ENCODE measurements at regions of chr17 and their contacts with region 1.

Region 1: DNA sequence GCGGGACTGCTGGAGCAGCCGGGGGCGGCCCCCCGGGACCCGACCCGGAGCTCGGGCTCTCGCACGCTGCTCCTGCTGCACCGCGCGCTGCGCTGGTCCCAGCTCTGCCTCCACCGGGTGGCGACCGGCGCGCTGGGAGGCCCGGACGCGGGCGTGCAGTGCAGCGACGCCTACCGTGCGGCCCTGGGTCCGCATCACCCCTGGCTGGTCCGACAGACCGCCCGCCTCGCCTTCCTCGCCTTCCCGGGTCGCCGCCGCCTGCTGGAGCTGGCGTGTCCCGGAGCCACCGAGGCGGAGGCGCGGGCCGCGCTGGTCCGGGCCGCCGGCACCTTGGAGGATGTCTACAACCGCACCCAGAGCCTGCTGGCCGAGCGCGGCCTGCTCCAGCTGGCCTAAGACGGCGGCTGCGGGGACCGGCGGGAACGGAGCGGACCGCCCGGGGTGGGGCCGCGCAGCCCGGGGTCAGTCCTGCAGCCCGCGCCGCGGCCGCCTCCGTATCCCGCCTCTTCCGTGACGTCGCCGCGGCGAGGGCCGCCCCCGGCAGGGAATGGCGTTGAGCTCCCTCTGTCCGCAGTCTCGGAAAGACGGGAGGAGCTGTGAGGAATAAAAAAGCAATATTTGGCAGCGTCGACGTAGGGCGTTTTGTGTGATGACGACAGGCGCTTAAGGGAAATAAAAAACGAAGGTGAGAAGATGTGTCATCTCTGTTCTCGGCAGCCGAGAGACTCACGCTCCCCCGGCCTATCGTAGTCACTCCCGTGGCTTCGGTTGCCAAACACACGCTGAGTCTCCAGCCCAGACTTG is 1.3 kb downstream of the GLTPD2 start:
- DNase-seq: peak; percentile 77 to 87 (median 80)
- H3K4me3 ChIP-seq: peak overlapping the region; percentile 49 to 60
- H3K4me3 Mint-ChIP-seq: peak overlapping the region; percentile 88 to 94 (median 90)
- H3K27ac ChIP-seq: peak overlapping the region; percentile 72
- H3K27ac Mint-ChIP-seq: peak overlapping the region; percentile 63 to 96 (median 88)
- H3K4me1 ChIP-seq: peaks cover 26% of the 10 kb centered on the region
- H3K4me1 Mint-ChIP-seq: peaks cover 12 to 41% (median 15%) of the 10 kb centered on the region in 4 donors
- H3K27me3 ChIP-seq: peaks cover 11% of the 10 kb centered on the region
- H3K27me3 Mint-ChIP-seq: peaks cover 22 to 23% of the 10 kb centered on the region in 2 donors

Region 2: DNA sequence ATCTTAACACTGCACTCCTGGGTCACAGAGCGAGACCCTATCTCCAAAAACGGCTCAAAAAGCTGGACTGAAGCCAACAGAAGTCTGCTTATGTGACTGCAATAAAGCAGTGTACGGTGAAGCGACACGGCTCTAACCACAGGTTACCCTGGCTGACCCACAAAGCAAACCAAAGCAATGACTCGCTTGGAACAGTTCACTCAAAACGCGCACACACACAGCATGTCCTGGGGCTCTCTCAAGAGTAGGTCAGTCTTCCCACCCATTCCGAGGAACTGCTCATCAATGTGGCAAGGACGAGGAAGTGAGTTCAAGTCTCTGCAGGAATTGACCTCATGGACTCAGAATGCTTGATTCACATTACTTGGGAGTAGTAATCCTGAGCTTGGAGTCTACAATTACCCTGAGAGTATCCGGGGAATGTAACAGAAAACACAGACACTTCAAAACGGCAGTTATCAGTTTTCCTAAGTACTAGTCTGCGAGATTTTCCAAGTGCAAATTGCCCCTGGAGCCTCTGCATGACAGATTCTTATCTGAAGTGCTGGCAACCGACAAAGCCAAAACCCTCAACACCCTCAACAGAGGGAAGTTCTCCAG is 111.6 kb before region 1 on chr17:
- CTCF ChIA-PET with region 1: no interaction called
- POLR2A ChIA-PET with region 1: no interaction called
- intact Hi-C with region 1: no loop called
- DNase-seq: no peak
- H3K4me3 ChIP-seq: no peak overlapping the region
- H3K4me3 Mint-ChIP-seq: no peak overlapping the region
- H3K27ac ChIP-seq: no peak overlapping the region
- H3K27ac Mint-ChIP-seq: peak overlapping the region in 1 of 7 donors; percentile 42
- H3K4me1 ChIP-seq: no peaks in the 10 kb centered on the region
- H3K4me1 Mint-ChIP-seq: peaks cover 0 to 2% (median under 1%) of the 10 kb centered on the region in 4 donors
- H3K27me3 ChIP-seq: no peaks in the 10 kb centered on the region
- H3K27me3 Mint-ChIP-seq: no peaks in the 10 kb centered on the region

Region 3: DNA sequence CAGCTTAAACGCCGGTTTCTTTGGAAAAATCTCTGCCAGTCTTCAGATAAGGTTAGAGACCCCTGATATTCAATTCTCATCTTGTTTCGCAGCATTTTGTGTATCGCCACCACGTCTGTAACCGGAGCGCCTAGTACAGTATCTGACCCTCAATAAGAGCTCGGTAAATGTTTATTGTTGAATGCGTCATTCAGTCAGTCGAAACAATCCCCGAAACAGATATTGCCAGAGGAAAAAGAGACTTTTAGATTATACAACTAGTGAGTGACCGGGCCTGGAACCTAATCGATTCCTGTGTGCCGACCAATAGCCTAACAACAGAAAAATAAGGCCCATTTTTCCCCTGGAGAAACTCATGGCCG is 86.8 kb before region 1 on chr17:
- CTCF ChIA-PET with region 1: interaction called, 59 read pairs
- POLR2A ChIA-PET with region 1: interaction called, 81 read pairs
- intact Hi-C with region 1: no loop called
- DNase-seq: no peak
- H3K4me3 ChIP-seq: peak overlapping the region; percentile 87 to 98
- H3K4me3 Mint-ChIP-seq: peak overlapping the region; percentile 75 to 92 (median 90)
- H3K27ac ChIP-seq: peak overlapping the region; percentile 71
- H3K27ac Mint-ChIP-seq: peak overlapping the region; percentile 93 to 97 (median 94)
- H3K4me1 ChIP-seq: peaks cover 30% of the 10 kb centered on the region
- H3K4me1 Mint-ChIP-seq: peaks cover 31 to 58% (median 40%) of the 10 kb centered on the region in 4 donors
- H3K27me3 ChIP-seq: no peaks in the 10 kb centered on the region
- H3K27me3 Mint-ChIP-seq: no peaks in the 10 kb centered on the region

Region 4: DNA sequence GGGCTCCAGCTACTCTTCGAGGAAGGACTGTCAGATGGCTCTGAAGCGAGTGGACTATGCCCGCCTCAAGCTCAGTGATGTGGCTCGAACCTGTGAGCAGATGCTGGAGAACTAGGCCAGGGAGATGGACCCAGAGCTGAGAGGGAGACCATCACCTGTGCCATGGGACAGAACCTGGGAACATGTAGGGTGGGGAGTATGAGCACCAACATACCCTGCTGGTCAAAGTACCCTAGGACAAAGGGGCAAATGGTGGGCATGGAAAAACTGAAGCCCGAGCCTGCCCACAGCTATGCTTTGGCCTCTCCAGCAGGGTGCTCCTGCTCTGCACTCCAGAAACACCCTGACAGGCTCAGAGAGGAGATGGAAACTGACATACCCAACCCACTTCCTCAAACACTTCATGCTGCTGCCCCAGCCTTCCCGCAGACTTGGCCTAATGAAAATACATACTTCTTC is 57.0 kb before region 1 on chr17:
- CTCF ChIA-PET with region 1: interaction called, 28 read pairs
- POLR2A ChIA-PET with region 1: interaction called, 24 read pairs
- intact Hi-C with region 1: loop called (anchors 1 kb)
- DNase-seq: no peak
- H3K4me3 ChIP-seq: no peak overlapping the region
- H3K4me3 Mint-ChIP-seq: peak overlapping the region in 2 of 8 donors; percentile 51 to 67
- H3K27ac ChIP-seq: no peak overlapping the region
- H3K27ac Mint-ChIP-seq: peak overlapping the region in 1 of 7 donors; percentile 90
- H3K4me1 ChIP-seq: peaks cover 18% of the 10 kb centered on the region
- H3K4me1 Mint-ChIP-seq: peaks cover 9 to 32% (median 16%) of the 10 kb centered on the region in 4 donors
- H3K27me3 ChIP-seq: no peaks in the 10 kb centered on the region
- H3K27me3 Mint-ChIP-seq: no peaks in the 10 kb centered on the region

Region 5: DNA sequence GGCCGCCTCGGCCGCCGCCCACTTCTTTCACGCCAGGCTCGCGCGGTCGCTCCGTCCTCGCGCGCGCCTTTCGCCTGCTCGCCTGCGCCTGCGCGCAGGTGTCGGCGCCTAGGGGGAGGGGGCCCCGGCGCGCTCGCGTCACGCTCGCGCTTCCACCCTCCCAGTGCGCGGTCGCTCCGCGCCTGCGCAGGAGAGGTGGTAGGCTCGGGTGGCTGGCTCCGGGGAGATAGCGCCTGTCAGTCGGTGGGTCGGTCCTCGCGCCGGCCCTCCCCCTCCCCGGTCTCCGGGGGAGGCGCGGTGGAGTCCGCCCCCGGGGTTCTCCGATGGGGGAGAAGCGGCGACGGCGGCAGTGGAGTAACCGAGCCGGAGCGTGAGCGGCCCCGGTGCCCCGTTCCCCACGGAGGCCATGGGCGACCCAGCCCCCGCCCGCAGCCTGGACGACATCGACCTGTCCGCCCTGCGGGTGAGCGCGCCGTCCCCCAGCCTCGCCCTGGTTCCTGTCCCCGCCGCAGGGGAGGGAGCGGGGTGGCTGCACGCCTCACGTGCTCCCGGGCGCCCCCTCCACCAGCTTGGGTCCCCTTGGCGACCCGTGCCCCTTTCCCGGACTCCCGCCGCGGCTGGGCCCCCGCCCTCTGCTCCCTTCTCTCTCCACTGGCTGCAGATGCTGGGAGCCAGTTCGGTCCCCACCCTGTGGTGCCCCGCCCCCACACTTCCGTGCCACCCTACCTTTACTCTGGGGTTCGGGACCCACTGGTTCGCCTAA is 43.3 kb after region 1 on chr17 and contains the start of gene MINK1:
- CTCF ChIA-PET with region 1: interaction called, 14 read pairs
- POLR2A ChIA-PET with region 1: interaction called, 20 read pairs
- intact Hi-C with region 1: loop called (anchors 5 kb)
- DNase-seq: peak; percentile 89 to 92 (median 89)
- H3K4me3 ChIP-seq: peak within 1 kb of the TSS; percentile 55 to 77
- H3K4me3 Mint-ChIP-seq: peak within 1 kb of the TSS; percentile 92 to 97 (median 96)
- H3K27ac ChIP-seq: peak within 1 kb of the TSS; percentile 84
- H3K27ac Mint-ChIP-seq: peak within 1 kb of the TSS; percentile 90 to 99 (median 97)
- H3K4me1 ChIP-seq: peaks cover 34% of the 10 kb centered on the region
- H3K4me1 Mint-ChIP-seq: peaks cover 27 to 46% (median 39%) of the 10 kb centered on the region in 4 donors
- H3K27me3 ChIP-seq: no peaks in the 10 kb centered on the region
- H3K27me3 Mint-ChIP-seq: no peaks in the 10 kb centered on the region
- total RNA-seq, gene MINK1: 134 to 139 TPM

Region 6: GRCh38 chr17:4891411-4892342 is 101.6 kb after region 1 on chr17:
- CTCF ChIA-PET with region 1: interaction called, 24 read pairs
- POLR2A ChIA-PET with region 1: interaction called, 3 read pairs
- intact Hi-C with region 1: loop called (anchors 1 kb)
- DNase-seq: no peak
- H3K4me3 ChIP-seq: no peak overlapping the region
- H3K4me3 Mint-ChIP-seq: no peak overlapping the region
- H3K27ac ChIP-seq: no peak overlapping the region
- H3K27ac Mint-ChIP-seq: no peak overlapping the region
- H3K4me1 ChIP-seq: no peaks in the 10 kb centered on the region
- H3K4me1 Mint-ChIP-seq: peaks cover 0 to 6% (median 2%) of the 10 kb centered on the region in 4 donors
- H3K27me3 ChIP-seq: no peaks in the 10 kb centered on the region
- H3K27me3 Mint-ChIP-seq: no peaks in the 10 kb centered on the region